ENCODE measurements at regions of chr6 and their contacts with region 1.

Region 1: GRCh38 chr6:127464881-127465459 is 5.8 kb upstream of the KIAA0408 start:
- DNase-seq: peak; percentile 76
- ATAC-seq: peak; percentile 83
- H3K4me3 Mint-ChIP-seq: no peak overlapping the region
- H3K27ac Mint-ChIP-seq: no peak overlapping the region
- H3K4me1 Mint-ChIP-seq: peaks cover 13% of the 10 kb centered on the region
- H3K27me3 Mint-ChIP-seq: no peaks in the 10 kb centered on the region

Region 2: GRCh38 chr6:127328043-127328609 is 136.8 kb before region 1 on chr6:
- CTCF ChIA-PET with region 1: no interaction called
- POLR2A ChIA-PET with region 1: no interaction called
- DNase-seq: no peak
- ATAC-seq: no peak
- H3K4me3 Mint-ChIP-seq: no peak overlapping the region
- H3K27ac Mint-ChIP-seq: no peak overlapping the region
- H3K4me1 Mint-ChIP-seq: peaks cover 4% of the 10 kb centered on the region
- H3K27me3 Mint-ChIP-seq: no peaks in the 10 kb centered on the region

Region 3: GRCh38 chr6:127484212-127484858 is 19.4 kb after region 1 on chr6:
- CTCF ChIA-PET with region 1: interaction called, 17 read pairs
- POLR2A ChIA-PET with region 1: no interaction called
- DNase-seq: peak; percentile 24
- ATAC-seq: peak; percentile 98
- H3K4me3 Mint-ChIP-seq: peak overlapping the region; percentile 54
- H3K27ac Mint-ChIP-seq: peak overlapping the region; percentile 87
- H3K4me1 Mint-ChIP-seq: peaks cover 36% of the 10 kb centered on the region
- H3K27me3 Mint-ChIP-seq: no peaks in the 10 kb centered on the region

Region 4: DNA sequence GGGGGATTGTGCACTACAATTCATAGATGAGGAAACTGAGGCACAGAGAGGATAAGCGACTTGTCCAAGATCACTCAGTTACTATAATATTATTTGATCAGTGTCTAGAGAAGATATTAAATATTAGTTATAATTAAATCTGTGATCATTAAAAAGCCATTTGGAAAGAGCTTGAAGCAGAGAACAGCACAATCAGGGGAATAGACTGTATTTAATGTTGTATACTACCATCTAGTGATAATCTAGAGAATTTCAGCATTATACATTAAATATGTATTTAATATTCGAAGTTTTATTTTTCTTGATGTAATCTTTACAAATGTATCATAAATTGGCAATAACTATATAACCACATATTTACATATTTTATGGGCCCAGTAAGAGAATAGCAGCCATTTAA is 74.3 kb after region 1 on chr6:
- CTCF ChIA-PET with region 1: interaction called, 44 read pairs
- POLR2A ChIA-PET with region 1: no interaction called
- DNase-seq: no peak
- ATAC-seq: peak; percentile 60
- H3K4me3 Mint-ChIP-seq: no peak overlapping the region
- H3K27ac Mint-ChIP-seq: no peak overlapping the region
- H3K4me1 Mint-ChIP-seq: peaks cover 3% of the 10 kb centered on the region
- H3K27me3 Mint-ChIP-seq: peaks cover 20% of the 10 kb centered on the region

Region 5: DNA sequence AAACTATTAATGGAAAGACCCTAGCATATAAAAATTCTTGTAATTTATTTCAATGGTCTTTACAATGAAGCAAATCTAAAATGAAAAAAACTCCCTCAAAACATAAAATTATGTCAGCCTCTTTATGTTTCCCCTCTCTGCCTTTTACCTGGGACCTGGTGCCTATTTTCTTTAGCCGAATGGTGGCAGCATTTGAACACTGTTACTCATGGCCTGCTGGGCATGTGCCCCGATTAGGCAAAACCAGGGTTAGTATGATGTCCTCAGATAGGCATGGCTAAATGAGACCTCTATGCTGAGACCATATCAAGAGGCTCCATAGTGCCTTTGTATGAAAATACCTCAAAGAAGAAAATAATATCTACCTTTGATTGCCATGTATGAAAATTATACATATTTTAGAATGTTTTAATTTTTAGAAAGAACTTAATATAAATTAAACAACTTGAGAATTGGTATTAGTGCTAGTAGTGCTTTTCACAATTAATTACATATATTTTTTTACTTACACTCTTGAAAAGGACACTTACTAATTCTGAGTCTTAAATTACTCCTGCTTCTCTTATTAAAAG is 89.6 kb after region 1 on chr6:
- CTCF ChIA-PET with region 1: no interaction called
- POLR2A ChIA-PET with region 1: no interaction called
- DNase-seq: peak; percentile 32
- ATAC-seq: no peak
- H3K4me3 Mint-ChIP-seq: no peak overlapping the region
- H3K27ac Mint-ChIP-seq: no peak overlapping the region
- H3K4me1 Mint-ChIP-seq: no peaks in the 10 kb centered on the region
- H3K27me3 Mint-ChIP-seq: peaks cover 23% of the 10 kb centered on the region